ENCODE measurements at regions of chr4 and their contacts with region 1.

Region 1: DNA sequence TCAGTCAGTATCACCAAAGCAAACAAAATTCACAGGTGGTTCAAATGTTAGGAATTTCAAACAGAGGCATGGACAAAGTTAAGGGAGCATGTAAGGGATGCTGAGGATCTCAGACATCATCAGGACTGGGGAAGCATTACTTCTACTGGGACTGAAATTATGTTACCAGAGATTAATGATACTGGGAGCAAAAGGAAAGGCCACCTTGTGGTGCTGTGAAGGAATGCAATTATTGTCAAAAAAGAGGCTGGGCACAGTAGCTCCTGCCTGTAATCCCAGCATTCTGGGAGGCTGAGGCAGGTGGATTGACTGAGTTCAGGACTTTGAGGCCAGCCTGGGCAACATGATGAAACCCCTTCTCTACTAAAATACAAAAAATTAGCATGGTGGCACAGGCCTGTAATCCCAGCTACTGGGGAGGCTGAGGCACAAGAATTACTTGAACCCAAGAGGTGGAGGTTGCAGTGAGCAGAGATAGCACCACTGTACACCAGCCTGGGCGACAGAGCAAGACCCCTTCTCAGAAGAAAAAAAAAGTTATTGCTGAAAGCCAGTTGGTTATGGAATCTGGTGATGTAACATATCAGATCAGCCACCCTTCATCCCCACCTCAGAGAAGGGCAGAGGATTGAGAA is 954.3 kb downstream of the PCDH7 start:
- DNase-seq: no peak
- ATAC-seq: peak in 1 of 4 donors; percentile 60
- H3K4me3 ChIP-seq: no peak overlapping the region
- H3K27ac ChIP-seq: no peak overlapping the region
- H3K4me1 ChIP-seq: no peaks in the 10 kb centered on the region
- H3K27me3 ChIP-seq: no peaks in the 10 kb centered on the region
- CTCF ChIP-seq: peak in 11 of 12 donors; percentile 26 to 53 (median 39)
- POLR2A ChIP-seq: no peak

Region 2: GRCh38 chr4:30714408-30715027 is 959.9 kb before region 1 on chr4:
- intact Hi-C with region 1: loop called in 7 of 10 experiments (anchors 5 to 10 kb)
- DNase-seq: peak in 1 of 5 donors; percentile 24
- ATAC-seq: peak in 1 of 4 donors; percentile 19
- H3K4me3 ChIP-seq: no peak overlapping the region
- H3K27ac ChIP-seq: no peak overlapping the region
- H3K4me1 ChIP-seq: peaks cover 0 to 27% (median 8%) of the 10 kb centered on the region in 12 donors
- H3K27me3 ChIP-seq: peaks cover 0 to 23% (median 0%) of the 10 kb centered on the region in 9 donors
- CTCF ChIP-seq: peak; percentile 46 to 69 (median 60)
- POLR2A ChIP-seq: no peak

Region 3: DNA sequence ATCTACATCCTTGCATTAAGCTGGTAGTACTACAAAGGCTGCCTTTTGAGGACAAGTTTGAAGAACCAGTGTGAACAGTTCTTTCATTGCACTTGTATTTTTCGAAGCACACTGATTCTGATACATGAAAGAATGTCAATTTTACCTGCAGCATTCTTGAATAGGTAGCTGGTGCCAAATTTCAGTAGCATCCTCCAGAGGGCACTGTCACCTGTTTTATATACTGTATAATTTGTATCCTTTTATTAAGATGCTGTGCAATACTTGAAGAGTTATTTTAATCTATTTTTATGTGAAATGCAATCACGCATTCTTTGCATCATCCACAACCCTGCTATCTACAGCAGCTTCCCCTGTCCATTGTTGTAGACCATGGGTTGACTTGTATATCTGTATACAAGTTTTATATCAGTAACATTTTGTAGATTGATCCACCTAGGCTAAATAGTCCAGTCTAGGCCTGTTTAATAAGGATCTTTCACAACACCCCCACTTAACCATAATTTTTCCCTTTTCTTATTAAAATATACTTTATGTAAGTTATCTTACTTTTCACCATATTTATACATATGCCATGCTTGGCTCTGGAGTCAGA is 628.6 kb before region 1 on chr4:
- intact Hi-C with region 1: loop called in 3 of 10 experiments (anchors 5 to 10 kb)
- DNase-seq: no peak
- ATAC-seq: peak in 3 of 4 donors; percentile 45 to 50 (median 49)
- H3K4me3 ChIP-seq: no peak overlapping the region
- H3K27ac ChIP-seq: no peak overlapping the region
- H3K4me1 ChIP-seq: peaks cover 0 to 16% (median 0%) of the 10 kb centered on the region in 12 donors
- H3K27me3 ChIP-seq: no peaks in the 10 kb centered on the region
- CTCF ChIP-seq: peak in 9 of 12 donors; percentile 33 to 52 (median 43)
- POLR2A ChIP-seq: no peak

Region 4: DNA sequence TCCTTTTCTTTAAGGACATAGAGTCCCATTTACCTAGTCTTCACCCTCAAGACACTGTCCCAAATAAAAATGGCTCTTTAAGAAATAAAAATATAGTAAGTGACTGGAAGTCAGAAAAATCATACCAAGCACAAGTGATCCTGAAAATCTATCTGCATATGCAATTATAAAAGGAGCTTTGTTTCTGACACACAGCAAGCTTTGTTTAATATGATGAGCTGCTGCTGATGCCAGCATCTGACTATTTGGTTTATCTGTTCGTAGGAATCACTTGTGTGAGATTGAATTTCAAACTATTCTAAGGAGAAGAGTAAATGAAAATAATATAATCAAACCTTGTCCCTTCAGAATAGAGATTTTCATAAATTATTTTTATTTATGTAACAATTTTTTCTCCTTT is 621.9 kb before region 1 on chr4:
- intact Hi-C with region 1: loop called in 3 of 10 experiments (anchors 5 to 10 kb)
- DNase-seq: no peak
- ATAC-seq: no peak
- H3K4me3 ChIP-seq: no peak overlapping the region
- H3K27ac ChIP-seq: no peak overlapping the region
- H3K4me1 ChIP-seq: peaks cover 0 to 5% (median 0%) of the 10 kb centered on the region in 12 donors
- H3K27me3 ChIP-seq: no peaks in the 10 kb centered on the region
- CTCF ChIP-seq: no peak
- POLR2A ChIP-seq: no peak

Region 5: GRCh38 chr4:31585503-31585902 is 88.9 kb before region 1 on chr4:
- intact Hi-C with region 1: no loop called
- DNase-seq: no peak
- ATAC-seq: no peak
- H3K4me3 ChIP-seq: no peak overlapping the region
- H3K27ac ChIP-seq: no peak overlapping the region
- H3K4me1 ChIP-seq: no peaks in the 10 kb centered on the region
- H3K27me3 ChIP-seq: no peaks in the 10 kb centered on the region
- CTCF ChIP-seq: no peak
- POLR2A ChIP-seq: no peak